Heart left ventricle (tissue), 16 donors: ENCODE measurements at regions of chr16 and their contacts with region 1.

Region 1: DNA sequence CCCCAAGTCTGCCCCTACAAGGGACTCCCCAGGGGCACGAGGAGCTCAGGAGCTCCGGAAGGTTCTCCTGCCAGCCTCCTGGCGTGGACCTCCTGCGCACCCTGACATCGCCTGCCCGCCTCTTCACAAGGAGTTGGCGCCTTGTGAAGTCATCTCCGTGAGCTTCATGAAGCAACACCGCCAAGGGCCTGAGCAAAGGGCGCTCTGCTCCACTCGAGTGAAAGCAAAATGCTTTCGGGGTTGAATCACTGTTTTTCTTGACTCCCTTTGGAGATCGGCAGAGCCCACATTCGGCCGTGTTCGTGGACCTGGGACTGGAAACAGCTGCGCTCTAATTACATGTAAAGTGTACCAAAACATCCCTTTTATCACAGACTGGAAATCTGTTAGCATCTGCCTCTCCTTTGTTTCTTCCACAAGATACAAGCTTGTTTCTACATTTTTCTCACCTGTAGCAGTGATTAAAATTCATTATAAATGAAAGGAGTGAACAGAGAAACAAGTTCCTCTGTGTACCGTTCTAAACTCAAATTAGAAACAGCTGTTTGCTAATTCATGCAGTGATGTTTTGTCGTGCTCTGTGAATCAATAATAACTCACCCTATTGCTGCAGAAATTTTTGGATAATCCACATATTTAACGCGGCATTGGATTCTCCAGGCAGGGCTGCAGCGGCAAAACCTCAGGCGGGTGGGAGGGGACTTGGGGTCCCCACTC is 203.3 kb downstream of the ZNF423 start:
- DNase-seq: peak; percentile 30 to 81 (median 74)
- ATAC-seq: peak; percentile 53 to 86 (median 73)
- H3K4me3 ChIP-seq: peak overlapping the region in 2 of 12 donors; percentile 19 to 28
- H3K27ac ChIP-seq: peak overlapping the region in 11 of 12 donors; percentile 3 to 75 (median 52)
- H3K4me1 ChIP-seq: peaks cover 0 to 7% (median 0%) of the 10 kb centered on the region in 12 donors
- H3K27me3 ChIP-seq: no peaks in the 10 kb centered on the region
- CTCF ChIP-seq: no peak
- POLR2A ChIP-seq: no peak

Region 2: DNA sequence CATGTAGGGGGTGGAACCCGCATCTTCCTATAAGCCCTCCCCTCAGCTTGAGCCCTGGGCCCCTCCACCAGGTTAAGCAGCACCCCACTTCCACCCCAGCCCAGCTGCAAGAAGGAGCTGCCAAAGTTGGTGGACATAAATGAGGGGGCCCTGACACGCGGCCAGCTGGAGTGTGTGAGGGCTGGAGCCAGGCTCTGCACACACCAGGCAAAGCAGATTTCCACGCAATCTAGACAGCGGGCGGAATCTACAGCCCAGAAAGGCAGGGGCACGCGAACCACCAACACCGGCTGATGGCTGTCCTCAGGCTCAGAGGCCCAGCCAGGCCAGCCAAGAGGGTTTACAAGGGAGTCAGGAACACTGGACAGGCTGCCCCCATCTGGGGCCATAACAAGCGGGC is 32.1 kb after region 1 on chr16:
- intact Hi-C with region 1: no loop called
- DNase-seq: no peak
- ATAC-seq: no peak
- H3K4me3 ChIP-seq: no peak overlapping the region
- H3K27ac ChIP-seq: no peak overlapping the region
- H3K4me1 ChIP-seq: peaks cover 0 to 8% (median 0%) of the 10 kb centered on the region in 12 donors
- H3K27me3 ChIP-seq: no peaks in the 10 kb centered on the region
- CTCF ChIP-seq: no peak
- POLR2A ChIP-seq: no peak

Region 3: DNA sequence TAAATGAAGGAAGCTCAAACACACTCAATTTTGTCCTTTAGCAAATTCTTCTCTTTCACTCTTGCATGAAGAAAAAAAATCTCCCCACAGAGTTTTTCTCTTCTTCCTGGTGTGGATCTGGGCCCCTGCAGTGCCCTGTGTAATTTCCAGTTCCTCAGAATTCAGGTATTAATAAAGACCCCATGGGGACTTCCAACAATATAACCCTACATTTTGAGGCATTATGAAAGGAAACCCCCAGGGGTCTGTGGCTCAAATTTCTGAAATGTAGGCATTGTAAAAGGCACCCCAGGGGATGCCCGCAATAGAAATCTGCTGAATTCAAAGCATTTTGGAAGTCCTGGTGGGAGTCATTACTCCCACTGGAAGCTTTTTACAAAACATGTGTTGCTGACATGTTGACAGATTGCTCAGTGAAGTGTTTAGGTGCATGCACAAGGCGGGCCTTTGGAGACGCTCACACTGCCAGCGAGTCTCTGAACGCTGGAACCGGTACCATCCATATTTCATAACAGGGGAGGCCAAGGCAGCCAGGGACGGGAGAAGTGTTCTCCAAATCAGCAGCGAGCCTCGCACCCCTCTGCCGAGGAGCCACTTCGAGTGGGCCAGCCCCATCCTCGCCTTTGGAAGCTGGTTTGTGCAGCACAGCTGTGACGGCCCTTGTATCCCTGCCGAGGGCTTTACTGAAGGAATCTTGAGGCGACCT is 49.3 kb after region 1 on chr16:
- intact Hi-C with region 1: no loop called
- DNase-seq: peak; percentile 39 to 87 (median 79)
- ATAC-seq: peak; percentile 50 to 79 (median 68)
- H3K4me3 ChIP-seq: peak overlapping the region in 1 of 12 donors; percentile 22
- H3K27ac ChIP-seq: peak overlapping the region in 6 of 12 donors; percentile 3 to 57 (median 18)
- H3K4me1 ChIP-seq: peaks cover 0 to 55% (median 33%) of the 10 kb centered on the region in 12 donors
- H3K27me3 ChIP-seq: peaks cover 0 to 3% (median 0%) of the 10 kb centered on the region in 9 donors
- CTCF ChIP-seq: no peak
- POLR2A ChIP-seq: no peak

Region 4: GRCh38 chr16:49716339-49716934 is 63.8 kb after region 1 on chr16:
- intact Hi-C with region 1: loop called in 1 of 10 experiments (anchors 10 kb)
- DNase-seq: no peak
- ATAC-seq: no peak
- H3K4me3 ChIP-seq: no peak overlapping the region
- H3K27ac ChIP-seq: no peak overlapping the region
- H3K4me1 ChIP-seq: peaks cover 0 to 4% (median 0%) of the 10 kb centered on the region in 12 donors
- H3K27me3 ChIP-seq: no peaks in the 10 kb centered on the region
- CTCF ChIP-seq: no peak
- POLR2A ChIP-seq: no peak